Gastrocnemius medialis (tissue), 4 donors: ENCODE measurements at regions of chr3 and their contacts with region 1.

Region 1: GRCh38 chr3:126522363-126522788 is 1.6 kb upstream of the CHST13 start:
- DNase-seq: peak in 1 of 2 donors; percentile 32
- ATAC-seq: peak in 1 of 2 donors; percentile 70
- H3K4me3 ChIP-seq: no peak overlapping the region
- H3K27ac ChIP-seq: no peak overlapping the region
- H3K4me1 ChIP-seq: peaks cover 0 to 7% of the 10 kb centered on the region in 2 donors
- H3K27me3 ChIP-seq: peaks cover 0 to 8% (median 0%) of the 10 kb centered on the region in 3 donors
- CTCF ChIP-seq: peak; percentile 72 to 92 (median 85)
- POLR2A ChIP-seq: no peak

Region 2: GRCh38 chr3:126267226-126267975 is 255.0 kb before region 1 on chr3:
- in situ Hi-C with region 1: no loop called
- intact Hi-C with region 1: no loop called
- DNase-seq: peak; percentile 61 to 83
- ATAC-seq: peak; percentile 55 to 63
- H3K4me3 ChIP-seq: peak overlapping the region; percentile 11 to 53 (median 46)
- H3K27ac ChIP-seq: peak overlapping the region; percentile 86 to 92 (median 90)
- H3K4me1 ChIP-seq: peaks cover 44 to 51% of the 10 kb centered on the region in 2 donors
- H3K27me3 ChIP-seq: no peaks in the 10 kb centered on the region
- CTCF ChIP-seq: peak in 2 of 5 experiments; percentile 36 to 40
- POLR2A ChIP-seq: peak; percentile 48 to 72

Region 3: GRCh38 chr3:126654571-126655383 is 132.4 kb after region 1 on chr3 and contains the start of gene TXNRD3:
- in situ Hi-C with region 1: no loop called
- intact Hi-C with region 1: loop called (anchors 2 kb)
- DNase-seq: peak; percentile 76 to 80
- ATAC-seq: peak; percentile 89 to 92
- H3K4me3 ChIP-seq: peak within 1 kb of the TSS; percentile 49 to 77 (median 56)
- H3K27ac ChIP-seq: peak within 1 kb of the TSS; percentile 74 to 91 (median 82)
- H3K4me1 ChIP-seq: peaks cover 7 to 10% of the 10 kb centered on the region in 2 donors
- H3K27me3 ChIP-seq: no peaks in the 10 kb centered on the region
- CTCF ChIP-seq: peak in 1 of 5 experiments; percentile 13
- POLR2A ChIP-seq: peak; percentile 81 to 86
- total RNA-seq, gene TXNRD3: 2.5 to 7.0 (median 4.5) TPM

Region 4: GRCh38 chr3:127455541-127456450 is 933.4 kb after region 1 on chr3:
- in situ Hi-C with region 1: no loop called
- intact Hi-C with region 1: loop called (anchors 10 kb)
- DNase-seq: peak in 1 of 2 donors; percentile 30
- ATAC-seq: peak; percentile 72 to 77
- H3K4me3 ChIP-seq: peak overlapping the region in 2 of 4 donors; percentile 28 to 36
- H3K27ac ChIP-seq: no peak overlapping the region
- H3K4me1 ChIP-seq: peaks cover 4 to 6% of the 10 kb centered on the region in 2 donors
- H3K27me3 ChIP-seq: peaks cover 32 to 44% (median 42%) of the 10 kb centered on the region in 3 donors
- CTCF ChIP-seq: peak; percentile 57 to 83 (median 73)
- POLR2A ChIP-seq: no peak

Region 5: DNA sequence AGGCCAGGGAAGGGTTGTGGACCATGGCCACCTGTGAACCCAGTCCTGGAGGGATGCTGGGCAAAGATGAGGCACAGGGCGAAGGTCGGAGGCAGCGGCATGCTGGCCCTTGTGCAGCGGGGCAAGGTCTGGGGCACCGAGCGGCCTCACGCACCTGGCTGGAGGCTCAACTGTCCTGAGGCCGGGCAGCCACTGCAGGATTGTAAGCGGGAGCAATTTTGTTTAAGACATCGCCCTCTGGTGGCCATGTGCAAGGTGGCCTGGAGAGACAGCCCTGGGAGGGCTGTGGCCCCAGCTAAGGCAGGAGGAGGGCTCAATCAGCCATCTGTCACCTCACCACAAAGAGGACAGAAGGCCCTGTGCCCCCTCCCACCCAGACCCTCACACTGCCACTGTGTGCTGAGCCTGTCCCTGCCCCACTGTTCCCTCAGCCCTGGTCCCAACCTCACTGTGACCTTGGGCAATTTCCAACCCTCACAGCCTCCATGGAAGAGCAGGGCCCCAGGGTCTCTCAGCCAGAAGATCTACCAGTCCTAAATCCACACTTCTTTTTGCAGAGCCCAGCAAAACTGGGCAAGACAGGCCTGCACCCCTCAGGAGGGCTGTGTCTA is 1021.9 kb after region 1 on chr3:
- in situ Hi-C with region 1: no loop called
- intact Hi-C with region 1: loop called (anchors 5 kb)
- DNase-seq: peak; percentile 29 to 60
- ATAC-seq: peak; percentile 45 to 55
- H3K4me3 ChIP-seq: no peak overlapping the region
- H3K27ac ChIP-seq: no peak overlapping the region
- H3K4me1 ChIP-seq: peaks cover 7 to 9% of the 10 kb centered on the region in 2 donors
- H3K27me3 ChIP-seq: no peaks in the 10 kb centered on the region
- CTCF ChIP-seq: peak in 4 of 5 experiments; percentile 62 to 80 (median 74)
- POLR2A ChIP-seq: no peak